ENCODE measurements at regions of chr1 and their contacts with region 1.

Region 1: DNA sequence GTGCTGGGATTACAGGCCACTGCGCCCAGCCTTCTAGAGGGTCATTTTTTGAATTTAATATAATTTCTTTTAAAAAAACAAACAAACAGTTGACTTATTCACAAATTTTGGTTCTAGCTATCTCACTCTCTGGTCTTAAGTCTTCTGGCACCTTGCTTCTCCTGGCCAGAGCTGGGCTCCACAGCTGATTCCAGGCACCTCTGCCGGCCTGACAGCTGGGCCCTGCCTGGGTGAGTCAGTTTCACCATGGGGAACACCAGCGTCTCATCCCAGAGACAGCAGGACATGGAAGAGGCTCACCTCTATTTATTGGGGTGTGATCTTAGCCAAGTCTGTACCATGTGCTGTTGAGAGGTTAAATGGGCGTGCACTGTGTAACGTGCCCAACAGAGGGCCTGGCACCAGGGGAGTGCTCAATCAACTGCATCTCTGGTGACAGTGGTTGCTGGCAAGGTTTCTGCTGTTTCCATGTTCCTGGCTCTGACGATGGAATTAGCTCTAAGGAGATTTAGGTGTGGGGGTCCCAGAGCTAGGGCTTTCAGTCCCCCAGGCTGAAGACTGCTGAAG is 956 bp downstream of the CPLANE2 start:
- DNase-seq: peak; percentile 58
- H3K27ac ChIP-seq: peak overlapping the region; percentile 87
- CTCF ChIP-seq: no peak; the same call in 1 of the 2 replicates

Region 2: DNA sequence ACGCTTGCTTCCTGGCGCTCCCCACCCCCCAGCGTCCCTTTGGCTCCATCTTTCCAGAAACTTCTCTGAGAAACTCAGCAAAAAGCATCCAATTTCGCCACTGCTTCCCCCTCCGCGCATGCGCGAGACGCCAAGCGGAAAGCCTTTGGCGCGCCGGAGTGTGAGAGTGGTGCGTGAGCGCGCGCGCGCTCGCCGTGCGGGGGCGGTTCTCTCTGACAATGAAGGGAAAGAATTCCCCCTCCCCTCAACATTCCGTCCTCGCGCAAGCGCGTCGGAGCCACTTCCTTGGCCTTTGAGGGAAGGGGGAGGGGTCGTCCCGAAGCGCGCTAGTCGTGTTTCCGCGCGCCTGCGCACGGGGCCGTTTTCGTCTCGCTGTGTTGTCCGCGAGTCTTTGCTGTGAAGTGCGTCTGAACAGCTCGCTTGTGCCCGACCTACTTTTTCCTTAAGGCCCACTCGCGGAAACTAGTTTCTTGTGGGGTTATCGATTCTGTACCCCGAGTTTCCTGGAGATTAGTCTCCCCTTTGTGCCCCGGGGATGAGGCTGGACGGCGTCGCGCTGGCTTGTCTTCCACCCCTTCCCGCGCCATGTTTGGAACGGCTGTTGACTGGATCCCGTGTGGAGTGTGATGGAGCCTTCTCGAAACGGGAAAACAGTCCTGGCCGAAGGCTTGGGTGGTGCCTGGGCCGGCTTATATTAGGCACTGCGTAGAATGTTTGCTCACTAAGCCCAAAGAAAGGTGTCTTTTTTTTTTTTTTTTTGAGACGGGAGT is 400.1 kb before region 1 on chr1:
- CTCF ChIA-PET with region 1: no interaction called
- POLR2A ChIA-PET with region 1: no interaction called
- DNase-seq: peak; percentile 91
- H3K27ac ChIP-seq: peak overlapping the region; percentile 100
- CTCF ChIP-seq: no peak

Region 3: GRCh38 chr1:15918962-15919715 is 316.9 kb before region 1 on chr1:
- CTCF ChIA-PET with region 1: no interaction called
- POLR2A ChIA-PET with region 1: no interaction called
- DNase-seq: peak; percentile 72
- H3K27ac ChIP-seq: no peak overlapping the region
- CTCF ChIP-seq: no peak

Region 4: DNA sequence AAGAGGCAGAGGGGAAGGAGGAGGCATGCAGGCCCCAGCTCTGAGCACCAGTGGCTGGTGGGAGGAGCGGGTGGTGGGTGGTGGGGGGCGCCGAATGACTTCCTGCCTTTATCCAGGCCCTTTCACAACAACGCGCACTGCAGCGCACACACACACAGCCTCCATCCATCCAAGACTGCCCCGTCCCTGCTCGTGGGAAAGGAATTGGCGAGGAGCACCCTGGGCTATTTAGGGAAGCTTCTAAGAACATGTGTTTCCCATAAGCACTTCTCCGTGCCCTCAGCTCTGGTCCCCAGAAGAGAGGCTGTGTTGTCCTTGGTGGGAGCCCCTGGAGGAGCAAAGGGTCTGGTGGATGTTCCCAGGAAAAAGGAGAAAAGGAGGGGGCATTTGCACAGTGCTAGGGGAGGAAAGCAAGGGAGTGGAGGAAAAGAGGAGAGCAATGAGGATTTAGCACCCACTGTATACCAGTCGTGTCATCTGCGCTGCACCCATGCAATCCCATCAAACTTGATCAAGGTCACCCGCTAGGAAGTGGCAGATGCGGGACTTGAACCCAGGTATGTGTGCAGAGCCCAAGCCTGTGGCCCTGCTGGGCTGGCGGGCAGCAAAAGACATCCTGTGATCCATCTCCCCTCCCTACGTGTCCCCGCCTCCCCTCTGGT is 108.2 kb before region 1 on chr1:
- CTCF ChIA-PET with region 1: no interaction called
- POLR2A ChIA-PET with region 1: no interaction called
- DNase-seq: no peak
- H3K27ac ChIP-seq: peak overlapping the region; percentile 80
- CTCF ChIP-seq: no peak

Region 5: DNA sequence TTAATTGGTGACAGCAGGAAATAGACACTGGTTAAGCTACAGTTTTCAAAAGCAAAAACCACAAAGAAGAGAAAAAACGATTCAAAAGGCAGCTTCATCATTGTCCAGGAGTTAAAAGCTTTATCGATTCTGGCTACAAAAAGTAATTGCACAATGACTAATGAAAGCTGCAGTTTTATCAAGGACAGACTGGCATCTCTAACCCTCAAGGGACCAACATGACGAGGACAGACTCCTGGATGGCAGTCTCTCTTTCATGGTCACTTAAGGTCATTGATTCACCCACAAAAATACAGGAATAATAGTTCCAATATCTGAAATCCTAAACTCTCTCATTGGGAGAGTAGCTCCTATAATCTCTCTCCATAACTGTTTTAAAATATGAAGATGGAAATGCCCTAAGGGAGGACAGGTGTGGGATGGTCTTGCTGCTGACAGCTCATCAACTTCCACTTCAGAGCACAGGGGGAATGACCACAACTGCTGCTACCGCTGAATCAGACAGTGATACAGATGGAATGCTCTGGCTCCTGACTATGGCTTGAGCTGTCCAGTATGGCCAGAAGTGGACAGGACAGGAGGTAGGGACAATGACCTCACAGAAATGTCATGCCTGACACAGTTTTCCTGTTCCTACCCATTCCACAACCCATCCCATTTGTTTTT is 18.4 kb after region 1 on chr1:
- CTCF ChIA-PET with region 1: no interaction called
- POLR2A ChIA-PET with region 1: no interaction called
- DNase-seq: no peak
- H3K27ac ChIP-seq: no peak overlapping the region
- CTCF ChIP-seq: no peak

Region 6: GRCh38 chr1:16266411-16267118 is 30.5 kb after region 1 on chr1:
- CTCF ChIA-PET with region 1: interaction called, 10 read pairs
- POLR2A ChIA-PET with region 1: no interaction called
- DNase-seq: no peak
- H3K27ac ChIP-seq: no peak overlapping the region
- CTCF ChIP-seq: no peak